ENCODE measurements at regions of chr9 and their contacts with region 1.

Region 1: DNA sequence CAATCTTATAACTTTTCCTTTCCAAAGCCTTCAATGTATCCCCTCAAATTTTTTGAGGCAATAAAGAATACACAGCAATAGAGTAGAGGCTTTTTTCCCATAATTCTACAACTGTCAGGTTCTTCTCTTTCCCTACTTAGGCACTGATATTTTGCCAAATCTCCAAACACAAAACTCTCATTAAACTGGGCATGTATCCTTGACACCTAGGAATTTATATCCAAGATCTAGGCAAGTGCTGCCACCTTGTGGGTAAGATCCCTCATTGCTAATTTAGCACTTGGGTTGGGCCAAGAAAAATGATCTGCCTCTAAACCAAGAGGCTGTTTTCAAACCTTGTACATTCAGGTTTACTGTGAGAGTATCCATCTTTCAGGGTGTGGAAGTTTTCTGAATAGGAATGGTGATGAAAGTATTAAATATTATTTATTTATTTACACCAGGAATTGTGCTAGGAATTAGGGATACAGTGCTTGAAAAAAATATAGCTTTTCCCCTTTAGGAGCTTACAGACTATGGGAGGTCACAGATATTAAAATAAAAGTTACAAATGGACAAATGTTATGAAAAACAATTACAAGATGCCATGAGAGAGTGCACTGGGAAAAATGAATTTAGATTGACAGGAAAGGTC is 17.6 kb downstream of the TSTD2 start:
- DNase-seq: peak; percentile 61
- H3K4me3 Mint-ChIP-seq: no peak overlapping the region
- H3K27ac Mint-ChIP-seq: no peak overlapping the region
- H3K4me1 Mint-ChIP-seq: peaks cover 18% of the 10 kb centered on the region
- H3K27me3 Mint-ChIP-seq: no peaks in the 10 kb centered on the region

Region 2: DNA sequence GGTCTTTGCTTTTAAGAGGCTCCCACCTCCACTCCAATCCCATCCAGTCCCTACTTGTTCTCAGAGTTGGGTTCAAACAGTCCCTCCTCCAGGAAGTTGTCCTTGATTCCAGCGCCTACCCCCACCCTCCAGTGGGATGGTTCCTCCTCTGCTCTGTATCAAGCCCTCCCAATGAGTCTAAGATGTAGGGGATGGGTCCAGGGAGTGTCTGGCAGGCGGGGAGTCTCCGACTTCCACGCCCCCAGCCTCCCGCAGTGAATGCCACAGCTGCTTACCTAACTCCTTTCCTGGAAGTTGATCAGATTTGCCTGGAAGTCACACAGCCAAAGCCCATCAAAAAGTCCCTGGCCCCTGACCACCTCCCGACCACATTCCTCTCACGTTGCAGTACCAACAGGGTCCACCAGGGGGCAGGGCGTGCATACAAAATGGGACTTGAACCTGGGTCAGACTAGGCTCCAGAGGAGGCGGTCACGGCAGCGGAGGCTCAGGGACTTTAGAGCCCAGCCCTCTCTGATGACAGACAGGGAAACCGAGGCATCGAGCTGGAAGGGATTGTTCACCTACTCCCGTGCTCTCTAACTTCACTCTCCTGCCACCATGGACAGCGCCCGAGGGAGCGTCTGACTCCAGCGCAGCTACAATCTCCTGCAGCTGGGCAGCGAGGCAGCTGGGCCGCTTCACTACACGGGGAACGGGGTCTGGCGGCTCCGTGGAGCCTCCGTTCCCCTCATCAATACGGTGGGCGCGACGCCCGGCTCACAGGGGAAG is 228.6 kb before region 1 on chr9:
- CTCF ChIA-PET with region 1: interaction called, 25 read pairs
- POLR2A ChIA-PET with region 1: interaction called, 3 read pairs
- DNase-seq: peak; percentile 76
- H3K4me3 Mint-ChIP-seq: no peak overlapping the region
- H3K27ac Mint-ChIP-seq: no peak overlapping the region
- H3K4me1 Mint-ChIP-seq: peaks cover 24% of the 10 kb centered on the region
- H3K27me3 Mint-ChIP-seq: peaks cover 31% of the 10 kb centered on the region

Region 3: GRCh38 chr9:97411789-97412625 is 203.5 kb before region 1 on chr9 and contains the start of gene TDRD7:
- CTCF ChIA-PET with region 1: interaction called, 30 read pairs
- POLR2A ChIA-PET with region 1: interaction called, 4 read pairs
- DNase-seq: peak; percentile 91
- H3K4me3 Mint-ChIP-seq: peak within 1 kb of the TSS; percentile 84
- H3K27ac Mint-ChIP-seq: peak within 1 kb of the TSS; percentile 68
- H3K4me1 Mint-ChIP-seq: peaks cover 28% of the 10 kb centered on the region
- H3K27me3 Mint-ChIP-seq: peaks cover 33% of the 10 kb centered on the region
- total RNA-seq, gene TDRD7: 19.4 to 19.8 TPM

Region 4: GRCh38 chr9:97425336-97425972 is 190.1 kb before region 1 on chr9:
- CTCF ChIA-PET with region 1: no interaction called
- POLR2A ChIA-PET with region 1: no interaction called
- DNase-seq: no peak
- H3K4me3 Mint-ChIP-seq: no peak overlapping the region
- H3K27ac Mint-ChIP-seq: no peak overlapping the region
- H3K4me1 Mint-ChIP-seq: peaks cover 2% of the 10 kb centered on the region
- H3K27me3 Mint-ChIP-seq: no peaks in the 10 kb centered on the region

Region 5: GRCh38 chr9:97468658-97469448 is 146.7 kb before region 1 on chr9:
- CTCF ChIA-PET with region 1: interaction called, 42 read pairs
- POLR2A ChIA-PET with region 1: no interaction called
- DNase-seq: peak; percentile 46
- H3K4me3 Mint-ChIP-seq: no peak overlapping the region
- H3K27ac Mint-ChIP-seq: no peak overlapping the region
- H3K4me1 Mint-ChIP-seq: no peaks in the 10 kb centered on the region
- H3K27me3 Mint-ChIP-seq: no peaks in the 10 kb centered on the region

Region 6: GRCh38 chr9:97689401-97689800 is 73.8 kb after region 1 on chr9:
- CTCF ChIA-PET with region 1: no interaction called
- POLR2A ChIA-PET with region 1: no interaction called
- DNase-seq: no peak
- H3K4me3 Mint-ChIP-seq: no peak overlapping the region
- H3K27ac Mint-ChIP-seq: no peak overlapping the region
- H3K4me1 Mint-ChIP-seq: peaks cover 10% of the 10 kb centered on the region
- H3K27me3 Mint-ChIP-seq: no peaks in the 10 kb centered on the region

Measured in activated CD4-positive, alpha-beta memory T cell treated with anti-CD3 and anti-CD28 coated beads, Interleukin-2, amount 10 ng/mL, durations not matched to agents 7 days and 5 days (primary cell).